ENCODE measurements at regions of chr3 and their contacts with region 1.

Region 1: DNA sequence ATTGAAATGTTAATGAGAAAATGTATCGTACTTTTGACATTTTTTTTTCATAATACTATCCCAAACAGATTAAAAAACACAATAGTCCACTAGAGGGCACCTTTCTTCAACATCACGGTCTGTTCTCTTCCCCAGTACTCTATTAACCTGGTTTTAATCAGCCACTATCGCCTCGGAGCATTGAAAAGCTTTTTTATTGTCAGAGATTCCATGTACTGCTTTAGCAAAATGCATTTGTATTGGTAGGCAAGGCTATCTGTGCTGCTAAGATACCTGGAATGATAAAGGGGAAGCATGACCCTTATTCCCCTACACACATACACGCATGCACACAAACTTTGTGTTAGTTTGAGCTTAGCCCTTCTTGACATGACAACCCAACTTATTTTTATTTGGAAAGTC is 160.1 kb upstream of the IL12A start:
- DNase-seq: peak; percentile 80
- H3K4me3 ChIP-seq: no peak overlapping the region
- H3K27ac ChIP-seq: peak overlapping the region; percentile 32
- H3K4me1 ChIP-seq: peaks cover 32% of the 10 kb centered on the region
- H3K27me3 ChIP-seq: no peaks in the 10 kb centered on the region
- CTCF ChIP-seq: peak; percentile 28 to 42
- POLR2A ChIP-seq: no peak

Region 2: DNA sequence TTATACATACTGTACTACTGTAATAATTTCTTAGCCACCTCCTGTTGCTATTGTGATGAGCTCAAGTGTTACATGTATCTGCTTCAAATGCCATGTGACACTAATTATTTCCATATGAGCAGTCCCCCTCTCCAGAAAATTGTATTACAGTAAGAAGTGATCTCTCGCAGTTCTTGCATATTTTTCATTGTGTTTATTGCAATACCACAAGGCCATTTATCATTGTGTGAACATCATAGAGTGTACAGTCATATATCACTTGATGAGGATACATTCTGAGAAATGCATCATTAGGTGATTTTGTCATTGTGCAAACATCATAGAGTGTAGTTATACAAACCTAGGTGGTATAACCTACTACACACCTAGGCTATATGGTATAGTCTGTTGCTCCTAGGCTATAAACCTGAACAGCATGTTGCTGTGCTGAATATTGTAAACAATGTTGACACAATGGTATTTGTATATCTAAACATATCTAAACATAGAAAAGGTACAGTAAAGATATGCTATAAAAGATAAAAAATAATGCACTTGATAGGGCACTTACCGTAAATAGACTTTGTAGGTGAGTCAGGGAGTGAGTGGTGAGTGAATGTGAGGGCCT is 1447.2 kb before region 1 on chr3:
- CTCF ChIA-PET with region 1: no interaction called
- POLR2A ChIA-PET with region 1: no interaction called
- dilution Hi-C with region 1: no loop called
- intact Hi-C with region 1: no loop called
- DNase-seq: no peak
- H3K4me3 ChIP-seq: no peak overlapping the region
- H3K27ac ChIP-seq: no peak overlapping the region
- H3K4me1 ChIP-seq: no peaks in the 10 kb centered on the region
- H3K27me3 ChIP-seq: no peaks in the 10 kb centered on the region
- CTCF ChIP-seq: no peak
- POLR2A ChIP-seq: no peak

Region 3: GRCh38 chr3:159839561-159840379 is 11.2 kb after region 1 on chr3:
- CTCF ChIA-PET with region 1: interaction called, 19 read pairs
- POLR2A ChIA-PET with region 1: no interaction called
- dilution Hi-C with region 1: no loop called
- intact Hi-C with region 1: no loop called
- DNase-seq: no peak
- H3K4me3 ChIP-seq: no peak within 1 kb of the TSS
- H3K27ac ChIP-seq: no peak within 1 kb of the TSS
- H3K4me1 ChIP-seq: peaks cover 49% of the 10 kb centered on the region
- H3K27me3 ChIP-seq: no peaks in the 10 kb centered on the region
- CTCF ChIP-seq: no peak
- POLR2A ChIP-seq: no peak

Region 4: DNA sequence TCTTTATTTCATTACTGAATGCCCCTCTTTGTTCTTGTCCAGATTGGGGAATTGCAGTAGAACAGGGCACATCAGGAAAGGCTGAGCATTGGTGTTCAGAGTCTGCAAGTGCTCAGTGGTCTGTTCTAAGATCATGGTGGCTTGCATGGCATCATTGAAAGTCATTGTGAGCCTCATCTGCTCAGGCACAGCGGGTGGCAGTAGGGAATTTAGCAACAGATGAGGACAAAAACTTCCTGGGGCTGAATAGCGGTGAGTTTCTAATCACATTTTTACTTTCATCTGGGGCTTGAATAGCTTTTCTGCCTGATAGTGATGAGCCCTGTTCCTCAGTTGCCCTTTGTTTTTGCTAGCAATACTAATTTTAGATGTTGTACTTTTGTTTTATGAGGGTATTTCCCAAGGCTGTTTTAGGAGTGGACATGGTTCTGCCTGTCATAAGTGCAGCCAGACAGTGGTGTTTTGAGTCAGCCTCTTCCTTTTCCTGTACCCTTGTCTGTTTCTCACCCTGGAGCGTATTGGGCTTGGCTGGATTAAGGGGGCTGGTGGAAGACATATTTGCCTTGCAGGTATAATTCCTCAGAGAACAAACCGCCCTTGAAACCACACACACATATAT is 32.9 kb after region 1 on chr3:
- CTCF ChIA-PET with region 1: interaction called, 32 read pairs
- POLR2A ChIA-PET with region 1: interaction called, 8 read pairs
- dilution Hi-C with region 1: no loop called
- intact Hi-C with region 1: no loop called
- DNase-seq: peak; percentile 71
- H3K4me3 ChIP-seq: no peak overlapping the region
- H3K27ac ChIP-seq: peak overlapping the region; percentile 85
- H3K4me1 ChIP-seq: peaks cover 61% of the 10 kb centered on the region
- H3K27me3 ChIP-seq: no peaks in the 10 kb centered on the region
- CTCF ChIP-seq: no peak
- POLR2A ChIP-seq: no peak

Region 5: GRCh38 chr3:159879598-159879997 is 51.1 kb after region 1 on chr3:
- CTCF ChIA-PET with region 1: interaction called, 201 read pairs
- POLR2A ChIA-PET with region 1: interaction called, 3 read pairs
- dilution Hi-C with region 1: no loop called
- intact Hi-C with region 1: loop called (anchors 1 kb)
- DNase-seq: no peak
- H3K4me3 ChIP-seq: no peak overlapping the region
- H3K27ac ChIP-seq: no peak overlapping the region
- H3K4me1 ChIP-seq: peaks cover 34% of the 10 kb centered on the region
- H3K27me3 ChIP-seq: no peaks in the 10 kb centered on the region
- CTCF ChIP-seq: no peak
- POLR2A ChIP-seq: no peak

Region 6: DNA sequence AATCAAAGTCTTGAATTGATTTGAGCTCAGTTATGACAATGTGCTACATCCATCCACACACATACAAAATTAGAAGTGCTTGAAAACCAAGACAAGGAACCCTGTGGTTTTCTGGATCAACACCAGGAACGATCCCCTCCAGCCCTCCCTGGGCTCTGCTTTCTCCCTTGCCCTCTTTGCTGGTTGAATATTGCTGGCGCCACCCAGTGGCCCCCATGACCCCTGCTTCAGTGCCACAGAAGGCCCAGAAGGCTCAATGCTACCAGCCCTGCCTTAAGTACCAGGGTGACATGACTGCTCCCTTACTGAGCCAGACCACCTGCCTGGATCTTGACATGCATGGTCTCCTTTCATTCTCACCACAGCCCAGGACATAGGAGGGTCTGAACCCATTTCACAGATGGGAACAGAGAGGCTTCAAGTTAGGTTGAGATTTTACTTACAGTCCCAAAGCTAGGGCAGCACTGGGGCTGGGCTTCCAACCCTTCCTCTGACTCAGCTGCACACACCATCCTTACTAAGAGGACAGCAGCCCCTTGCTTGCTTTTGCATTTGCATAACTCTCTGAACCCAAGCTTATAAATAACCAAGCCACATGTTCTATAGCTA is 175.1 kb after region 1 on chr3:
- CTCF ChIA-PET with region 1: interaction called, 111 read pairs
- POLR2A ChIA-PET with region 1: no interaction called
- dilution Hi-C with region 1: no loop called
- intact Hi-C with region 1: loop called (anchors 1 kb)
- DNase-seq: peak; percentile 68
- H3K4me3 ChIP-seq: no peak overlapping the region
- H3K27ac ChIP-seq: no peak overlapping the region
- H3K4me1 ChIP-seq: no peaks in the 10 kb centered on the region
- H3K27me3 ChIP-seq: no peaks in the 10 kb centered on the region
- CTCF ChIP-seq: peak; percentile 67
- POLR2A ChIP-seq: no peak